Lower leg skin (tissue), 4 donors: ENCODE measurements at regions of chr9 and their contacts with region 1.

Region 1: DNA sequence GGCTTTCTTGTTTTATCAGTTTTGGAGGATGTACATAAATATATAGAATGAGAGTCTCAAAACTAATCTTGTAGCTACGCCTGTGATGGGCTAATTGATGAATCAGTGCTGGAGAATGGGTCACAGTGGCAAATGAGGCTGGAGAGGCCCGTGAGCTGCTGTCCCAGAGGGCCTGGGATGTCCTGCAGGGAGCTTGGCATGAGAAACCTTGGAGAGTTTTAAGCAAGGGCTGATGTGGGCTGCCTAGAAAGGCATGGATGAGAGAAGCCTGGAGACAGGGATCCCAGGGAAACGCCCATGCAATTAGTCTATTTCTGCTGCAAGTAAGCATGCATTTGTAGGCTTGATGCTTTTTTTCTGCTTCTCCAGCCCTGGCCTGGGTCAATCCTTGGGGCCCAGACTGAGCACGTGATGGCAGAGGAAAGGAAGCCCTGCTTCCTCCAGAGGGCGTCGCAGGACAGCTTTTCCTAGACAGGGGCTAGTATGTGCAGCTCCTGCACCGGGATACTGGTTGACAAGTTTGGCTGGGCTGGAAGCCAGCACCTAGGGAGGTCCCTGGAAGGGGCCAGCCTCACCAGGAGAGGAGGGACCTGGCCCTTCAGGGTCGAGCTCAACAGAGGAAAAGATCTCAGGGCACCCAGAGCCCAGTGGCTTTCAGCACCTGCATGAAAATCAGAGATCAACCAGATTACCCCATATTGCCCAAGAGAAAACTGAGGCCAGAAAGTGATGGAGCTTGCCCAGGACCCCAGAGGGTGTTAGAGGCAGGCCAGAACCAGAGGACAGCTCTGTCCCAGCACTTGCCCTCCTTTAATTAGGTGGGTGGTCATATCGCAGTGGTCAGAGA is 67.4 kb downstream of the KLF4 start:
- DNase-seq: peak; percentile 75 to 95
- H3K4me3 ChIP-seq: no peak overlapping the region
- CTCF ChIP-seq: peak in 1 of 3 donors; percentile 56
- POLR2A ChIP-seq: no peak

Region 2: DNA sequence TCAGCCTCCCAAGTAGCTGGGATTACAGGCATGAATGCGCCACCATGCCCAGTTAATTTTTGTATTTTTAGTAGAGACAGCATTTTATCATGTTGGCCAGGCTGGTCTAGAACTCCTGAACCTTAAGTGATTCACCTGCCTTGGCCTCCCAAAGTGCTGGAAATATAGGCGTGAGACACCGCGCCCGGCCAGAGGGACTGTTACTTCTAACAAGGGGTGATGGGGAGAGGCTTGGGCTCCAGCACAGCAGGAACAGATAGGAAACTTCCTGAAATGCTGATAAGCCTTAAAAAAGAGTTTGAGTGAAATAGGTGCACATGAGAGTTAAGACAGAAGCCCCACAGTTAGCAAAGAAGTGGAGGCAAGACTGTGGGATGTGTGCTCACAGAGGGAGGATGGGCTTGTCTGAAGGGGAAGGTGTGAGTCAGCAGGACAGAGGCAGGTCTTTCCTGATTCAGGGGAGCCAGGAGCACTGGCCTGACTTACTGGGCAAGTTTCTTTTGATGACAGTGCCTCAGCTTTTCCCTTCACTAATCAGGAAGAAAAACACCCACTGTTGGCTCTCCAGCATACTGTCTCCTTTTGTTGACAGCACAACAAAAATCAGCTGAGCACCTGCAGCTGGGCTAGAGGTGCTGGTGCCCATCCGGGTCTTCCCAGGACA is 70.7 kb before region 1 on chr9:
- intact Hi-C with region 1: loop called (anchors 2 kb)
- DNase-seq: no peak
- H3K4me3 ChIP-seq: no peak overlapping the region
- CTCF ChIP-seq: no peak
- POLR2A ChIP-seq: no peak

Region 3: GRCh38 chr9:107447810-107448209 is 25.6 kb after region 1 on chr9:
- intact Hi-C with region 1: no loop called
- DNase-seq: no peak
- H3K4me3 ChIP-seq: no peak overlapping the region
- CTCF ChIP-seq: no peak
- POLR2A ChIP-seq: no peak